Cardiac septum (tissue), 1 donor: ENCODE measurements at regions of chr4 and their contacts with region 1.

Region 1: GRCh38 chr4:158003212-158003611 is 169.6 kb downstream of the GASK1B start:
- DNase-seq: no peak

Region 2: DNA sequence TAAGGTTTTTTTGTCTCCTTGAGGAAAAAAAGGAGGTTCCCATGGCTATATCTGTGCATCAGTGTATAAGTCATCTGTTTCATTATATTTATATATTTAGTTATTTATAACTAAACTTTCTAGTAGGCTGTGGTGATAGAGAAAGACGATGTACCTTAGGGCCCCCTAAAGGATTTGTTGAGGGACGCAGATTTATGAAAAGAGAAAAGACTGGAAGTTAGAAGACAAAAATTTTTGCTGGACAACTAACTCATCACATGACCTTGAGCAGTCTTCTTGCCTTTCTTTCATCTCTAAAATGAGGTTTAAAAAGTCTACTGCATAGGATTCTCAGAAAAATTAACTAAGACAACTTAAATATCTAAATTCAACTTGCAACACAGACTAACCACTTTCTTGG is 163.5 kb after region 1 on chr4:
- intact Hi-C with region 1: loop called (anchors 2 kb)
- DNase-seq: no peak